Activated CD4-positive, alpha-beta T cell treated with anti-CD3 and anti-CD28 coated beads, Interleukin-2, amount 10 ng/mL, durations not matched to agents 24 days and 14 days (primary cell): ENCODE measurements at regions of chrX and their contacts with region 1.

Region 1: GRCh38 chrX:78517124-78517523 is 142.0 kb downstream of the RTL3 start:
- DNase-seq: peak; percentile 88
- H3K4me3 Mint-ChIP-seq: peak overlapping the region; percentile 39
- H3K27ac Mint-ChIP-seq: peak overlapping the region; percentile 93
- H3K4me1 Mint-ChIP-seq: peaks cover 40% of the 10 kb centered on the region
- H3K27me3 Mint-ChIP-seq: no peaks in the 10 kb centered on the region

Region 2: DNA sequence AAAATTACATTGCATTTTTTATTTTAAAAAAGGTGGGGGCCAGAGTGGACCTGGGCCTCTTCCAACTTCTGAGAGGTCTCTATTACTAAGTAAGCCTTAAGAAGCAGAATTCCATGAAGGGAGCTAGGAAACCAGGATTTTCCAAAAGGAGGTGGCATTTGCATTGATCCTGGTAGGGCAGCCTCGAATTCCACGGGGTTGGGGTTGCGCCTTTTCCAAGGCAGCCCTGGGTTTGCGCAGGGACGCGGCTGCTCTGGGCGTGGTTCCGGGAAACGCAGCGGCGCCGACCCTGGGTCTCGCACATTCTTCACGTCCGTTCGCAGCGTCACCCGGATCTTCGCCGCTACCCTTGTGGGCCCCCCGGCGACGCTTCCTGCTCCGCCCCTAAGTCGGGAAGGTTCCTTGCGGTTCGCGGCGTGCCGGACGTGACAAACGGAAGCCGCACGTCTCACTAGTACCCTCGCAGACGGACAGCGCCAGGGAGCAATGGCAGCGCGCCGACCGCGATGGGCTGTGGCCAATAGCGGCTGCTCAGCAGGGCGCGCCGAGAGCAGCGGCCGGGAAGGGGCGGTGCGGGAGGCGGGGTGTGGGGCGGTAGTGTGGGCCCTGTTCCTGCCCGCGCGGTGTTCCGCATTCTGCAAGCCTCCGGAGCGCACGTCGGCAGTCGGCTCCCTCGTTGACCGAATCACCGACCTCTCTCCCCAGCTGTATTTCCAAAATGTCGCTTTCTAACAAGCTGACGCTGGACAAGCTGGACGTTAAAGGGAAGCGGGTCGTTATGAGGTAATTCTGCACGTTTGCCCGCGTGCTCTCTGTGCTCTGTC is 413.3 kb before region 1 on chrX and contains the start of gene PGK1:
- intact Hi-C with region 1: loop called (anchors 10 kb)
- DNase-seq: peak; percentile 98
- H3K4me3 Mint-ChIP-seq: peak within 1 kb of the TSS; percentile 97
- H3K27ac Mint-ChIP-seq: peak within 1 kb of the TSS; percentile 91
- H3K4me1 Mint-ChIP-seq: peaks cover 25% of the 10 kb centered on the region
- H3K27me3 Mint-ChIP-seq: no peaks in the 10 kb centered on the region
- total RNA-seq, gene PGK1: 1,039 and 1,063 TPM in 2 replicates

Region 3: DNA sequence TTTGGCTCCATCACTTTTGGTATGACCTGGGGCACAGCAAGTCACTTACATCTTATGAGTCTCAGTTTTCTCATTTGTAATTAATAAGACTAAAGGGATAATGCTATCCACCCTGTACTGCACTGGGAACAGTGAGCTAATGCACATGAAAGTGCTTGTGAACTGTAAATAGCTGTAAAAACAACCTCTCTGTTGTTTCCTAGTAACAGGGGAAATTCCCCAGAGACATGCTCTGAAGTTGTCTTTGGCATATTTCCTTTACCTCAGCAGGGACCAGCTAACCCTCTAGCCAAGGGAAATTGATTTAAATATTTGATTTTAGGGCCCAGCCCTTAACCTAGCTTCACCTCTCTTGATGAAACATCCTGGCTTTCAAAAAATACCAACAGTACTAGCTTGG is 183.6 kb before region 1 on chrX:
- intact Hi-C with region 1: loop called (anchors 2 kb)
- DNase-seq: peak; percentile 79
- H3K4me3 Mint-ChIP-seq: peak overlapping the region; percentile 44
- H3K27ac Mint-ChIP-seq: peak overlapping the region; percentile 91
- H3K4me1 Mint-ChIP-seq: peaks cover 48% of the 10 kb centered on the region
- H3K27me3 Mint-ChIP-seq: no peaks in the 10 kb centered on the region

Region 4: DNA sequence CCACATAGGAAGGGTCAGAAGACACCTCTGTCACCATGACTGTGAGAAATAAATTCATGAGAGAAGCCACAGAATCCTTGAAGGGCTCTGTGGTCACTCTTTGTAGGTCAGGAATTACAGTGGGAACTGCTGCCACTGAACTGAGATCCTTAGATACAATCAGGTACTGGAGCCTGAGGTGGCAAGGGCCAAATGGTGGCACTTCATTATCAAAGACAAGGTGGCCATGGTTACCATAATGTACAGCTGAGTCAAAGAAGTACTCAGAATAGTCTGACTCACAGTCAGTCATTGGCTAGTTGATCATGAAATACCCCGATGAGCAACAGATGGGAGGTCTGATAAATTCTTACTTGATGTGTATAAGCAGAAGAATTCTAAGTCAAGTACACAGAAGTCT is 10.1 kb after region 1 on chrX:
- intact Hi-C with region 1: loop called (anchors 1 kb)
- DNase-seq: peak; percentile 59
- H3K4me3 Mint-ChIP-seq: no peak overlapping the region
- H3K27ac Mint-ChIP-seq: peak overlapping the region; percentile 83
- H3K4me1 Mint-ChIP-seq: peaks cover 15% of the 10 kb centered on the region
- H3K27me3 Mint-ChIP-seq: no peaks in the 10 kb centered on the region

Region 5: DNA sequence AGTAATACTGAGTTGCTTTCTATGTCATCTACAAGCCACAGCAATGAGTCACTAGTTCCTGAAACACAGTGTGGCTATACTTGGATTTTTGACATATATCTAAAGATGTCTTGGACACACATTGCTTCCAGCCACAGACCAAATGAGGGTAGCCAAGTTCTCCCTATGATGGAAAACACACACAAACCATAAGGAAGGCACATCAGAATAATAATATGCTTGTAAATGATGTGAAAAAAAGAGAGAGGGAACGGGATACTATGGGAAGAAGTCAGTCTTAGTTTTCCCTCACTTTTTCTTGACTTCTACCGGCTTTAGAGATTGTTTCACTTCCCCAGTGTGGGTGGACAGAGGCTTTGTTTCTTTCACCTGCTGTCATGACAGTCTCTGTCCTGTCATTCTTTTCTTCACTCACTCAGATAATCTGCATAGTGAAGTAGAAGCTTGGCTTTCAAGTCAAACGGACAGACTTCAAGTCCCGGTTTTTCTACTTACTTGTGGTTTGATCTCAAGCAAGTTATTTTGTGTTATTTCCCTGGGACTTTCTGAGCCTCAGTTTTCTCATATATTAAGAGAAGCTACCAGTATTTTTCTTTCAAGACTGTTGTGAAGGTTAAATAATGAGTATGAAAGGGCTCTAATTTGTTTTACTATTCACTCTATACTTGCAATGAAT is 462.8 kb after region 1 on chrX:
- intact Hi-C with region 1: loop called (anchors 2 kb)
- DNase-seq: peak; percentile 58
- H3K4me3 Mint-ChIP-seq: peak overlapping the region; percentile 79
- H3K27ac Mint-ChIP-seq: peak overlapping the region; percentile 100
- H3K4me1 Mint-ChIP-seq: peaks cover 19% of the 10 kb centered on the region
- H3K27me3 Mint-ChIP-seq: no peaks in the 10 kb centered on the region

Region 6: DNA sequence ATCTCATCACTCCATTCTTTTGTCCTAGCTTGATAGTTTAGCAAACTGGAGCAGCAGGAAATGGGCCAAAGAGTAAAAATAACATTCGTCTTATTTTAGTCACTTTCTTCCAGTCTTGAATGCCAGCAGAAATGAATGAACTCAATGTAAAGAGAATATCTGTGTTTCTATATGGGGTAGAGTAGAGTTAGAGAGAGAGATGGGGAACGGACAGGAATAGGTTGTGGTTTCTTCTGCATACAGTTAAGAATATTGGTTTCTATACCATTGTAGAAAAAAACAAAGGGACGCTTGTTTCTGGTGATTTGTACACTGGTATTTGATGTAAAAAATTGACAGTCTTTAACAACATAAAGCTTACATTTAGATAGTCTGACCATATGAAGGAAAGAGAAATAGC is 636.2 kb after region 1 on chrX:
- intact Hi-C with region 1: loop called (anchors 5 kb)
- DNase-seq: no peak
- H3K4me3 Mint-ChIP-seq: peak overlapping the region; percentile 89
- H3K27ac Mint-ChIP-seq: peak overlapping the region; percentile 93
- H3K4me1 Mint-ChIP-seq: peaks cover 60% of the 10 kb centered on the region
- H3K27me3 Mint-ChIP-seq: no peaks in the 10 kb centered on the region